Transverse colon (tissue), 4 donors: ENCODE measurements at regions of chr16 and their contacts with region 1.

Region 1: GRCh38 chr16:66809765-66810164 is 8.4 kb upstream of the TERB1 start:
- DNase-seq: no peak
- H3K4me3 ChIP-seq: no peak overlapping the region
- H3K27ac ChIP-seq: no peak overlapping the region
- H3K4me1 ChIP-seq: no peaks in the 10 kb centered on the region
- H3K27me3 ChIP-seq: no peaks in the 10 kb centered on the region
- CTCF ChIP-seq: no peak
- EP300 ChIP-seq: no peak
- POLR2A ChIP-seq: no peak

Region 2: DNA sequence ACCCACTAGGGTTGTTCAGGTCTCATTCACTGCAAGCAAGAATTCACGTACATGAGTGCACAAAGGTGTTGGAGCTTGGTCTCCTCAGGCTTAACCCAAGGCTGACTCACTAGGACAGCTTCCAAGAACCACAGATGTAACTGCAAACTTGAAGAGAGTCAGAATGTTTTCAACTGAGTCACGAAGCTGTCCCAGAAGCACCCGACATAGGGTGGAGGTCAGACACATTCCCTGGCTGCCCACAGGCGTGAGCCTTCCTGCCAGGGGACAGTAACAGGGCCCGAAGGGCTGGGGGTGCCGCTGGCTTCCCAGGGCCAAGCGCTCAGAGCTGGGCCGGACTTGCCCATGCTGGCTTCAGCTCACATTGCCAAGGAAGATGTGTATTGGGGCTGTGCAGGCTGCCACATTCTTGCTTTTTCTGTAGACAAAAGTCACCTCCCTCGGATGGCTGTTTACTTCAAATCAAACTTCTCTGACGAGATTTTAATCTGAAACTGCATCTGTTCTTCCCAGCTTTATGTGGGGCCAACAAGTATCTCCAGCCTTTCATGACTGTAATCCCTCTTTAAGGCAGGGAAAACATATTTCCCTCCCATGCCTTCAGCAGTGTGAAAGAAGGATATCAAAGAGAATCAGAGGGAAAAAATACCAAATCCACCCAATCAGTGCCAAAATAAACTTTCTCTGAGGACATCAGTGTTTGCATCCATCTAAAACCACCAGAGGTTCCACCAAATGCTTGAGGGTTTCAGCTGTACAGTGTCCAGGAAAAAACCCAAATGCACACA is 191.0 kb before region 1 on chr16:
- in situ Hi-C with region 1: no loop called
- intact Hi-C with region 1: no loop called
- DNase-seq: no peak
- H3K4me3 ChIP-seq: no peak overlapping the region
- H3K27ac ChIP-seq: peak overlapping the region in 2 of 4 donors; percentile 43 to 49
- H3K4me1 ChIP-seq: peaks cover 0 to 7% (median 2%) of the 10 kb centered on the region in 4 donors
- H3K27me3 ChIP-seq: no peaks in the 10 kb centered on the region
- CTCF ChIP-seq: no peak
- EP300 ChIP-seq: no peak
- POLR2A ChIP-seq: no peak

Region 3: GRCh38 chr16:67173808-67174705 is 364.3 kb after region 1 on chr16:
- in situ Hi-C with region 1: no loop called
- intact Hi-C with region 1: loop called (anchors 5 kb)
- DNase-seq: peak; percentile 93
- H3K4me3 ChIP-seq: peak overlapping the region; percentile 29 to 52 (median 40)
- H3K27ac ChIP-seq: peak overlapping the region; percentile 89 to 95 (median 94)
- H3K4me1 ChIP-seq: peaks cover 39 to 62% (median 48%) of the 10 kb centered on the region in 4 donors
- H3K27me3 ChIP-seq: no peaks in the 10 kb centered on the region
- CTCF ChIP-seq: peak in 4 of 5 experiments; percentile 8 to 30 (median 21)
- EP300 ChIP-seq: peak; percentile 5
- POLR2A ChIP-seq: peak; percentile 96